ENCODE measurements at regions of chr16 and their contacts with region 1.

Region 1: GRCh38 chr16:66894948-66895688 is 14.8 kb downstream of the PDP2 start:
- DNase-seq: peak; percentile 76
- H3K4me3 ChIP-seq: no peak overlapping the region
- H3K27ac ChIP-seq: no peak overlapping the region
- H3K4me1 ChIP-seq: peaks cover 8% of the 10 kb centered on the region
- H3K27me3 ChIP-seq: no peaks in the 10 kb centered on the region
- CTCF ChIP-seq: peak; percentile 87

Region 2: DNA sequence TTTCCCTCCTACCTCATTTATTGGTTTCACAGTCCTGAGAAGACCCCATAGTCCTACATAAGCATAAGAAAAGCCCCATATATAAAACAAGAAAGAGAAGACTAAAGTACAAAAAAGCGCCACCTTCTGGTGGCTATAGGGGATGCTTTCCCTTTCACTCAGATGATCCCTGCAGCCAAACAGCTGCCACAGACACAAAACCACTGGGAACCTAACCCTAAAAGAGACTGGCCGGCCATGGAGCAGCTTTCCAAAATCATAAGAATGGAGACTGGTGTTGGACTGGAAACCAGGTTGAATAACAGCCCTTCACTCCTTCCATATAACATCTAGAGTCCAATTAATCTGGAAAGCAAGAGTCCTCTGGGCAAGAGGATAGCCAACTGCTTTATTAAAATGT is 155.1 kb before region 1 on chr16:
- CTCF ChIA-PET with region 1: interaction called, 12 read pairs
- POLR2A ChIA-PET with region 1: no interaction called
- intact Hi-C with region 1: no loop called
- DNase-seq: peak; percentile 68
- H3K4me3 ChIP-seq: no peak overlapping the region
- H3K27ac ChIP-seq: peak overlapping the region; percentile 25
- H3K4me1 ChIP-seq: peaks cover 14% of the 10 kb centered on the region
- H3K27me3 ChIP-seq: no peaks in the 10 kb centered on the region
- CTCF ChIP-seq: peak; percentile 88

Region 3: GRCh38 chr16:66928702-66929388 is 33.7 kb after region 1 on chr16:
- CTCF ChIA-PET with region 1: interaction called, 11 read pairs
- POLR2A ChIA-PET with region 1: interaction called, 7 read pairs
- intact Hi-C with region 1: loop called (anchors 1 kb)
- DNase-seq: peak; percentile 51
- H3K4me3 ChIP-seq: no peak overlapping the region
- H3K27ac ChIP-seq: no peak overlapping the region
- H3K4me1 ChIP-seq: peaks cover 13% of the 10 kb centered on the region
- H3K27me3 ChIP-seq: peaks cover 24% of the 10 kb centered on the region
- CTCF ChIP-seq: peak; percentile 71

Region 4: DNA sequence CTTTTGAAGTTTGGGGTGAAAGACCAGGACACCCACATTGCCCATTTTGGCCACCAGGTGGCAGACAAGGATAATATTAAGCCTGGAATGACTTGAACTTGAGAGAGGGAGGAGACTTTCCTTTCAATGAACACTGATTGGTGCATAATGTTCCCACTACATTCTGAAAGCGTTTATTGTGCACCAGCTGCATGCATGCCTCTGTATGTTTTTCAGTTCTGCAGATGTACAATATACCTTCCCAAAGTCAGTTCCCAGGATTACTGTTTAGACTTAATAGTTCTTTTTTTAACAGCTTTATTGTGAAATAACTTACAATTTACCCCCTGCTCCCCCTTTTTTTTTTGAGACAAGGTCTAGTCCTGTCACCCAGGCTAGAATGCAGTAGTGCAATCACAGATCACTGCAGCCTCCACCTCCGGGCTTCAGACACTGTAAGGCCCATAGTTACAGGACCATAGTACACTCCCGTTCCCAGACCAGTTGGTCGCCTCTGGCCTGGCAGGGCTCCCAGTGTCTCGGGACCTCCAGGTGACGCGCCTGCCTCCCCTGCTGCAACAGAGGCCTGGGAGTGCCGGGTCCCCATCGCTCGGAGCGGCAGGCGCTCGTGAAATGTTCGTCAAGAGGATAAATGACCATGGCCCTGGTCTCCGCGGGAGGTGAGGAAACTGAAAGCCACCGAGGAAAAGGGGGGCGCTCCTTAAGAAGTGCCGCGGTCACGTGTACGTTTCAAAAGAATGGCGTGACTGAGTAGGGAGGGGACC is 52.4 kb after region 1 on chr16:
- CTCF ChIA-PET with region 1: no interaction called
- POLR2A ChIA-PET with region 1: no interaction called
- intact Hi-C with region 1: loop called (anchors 5 kb)
- DNase-seq: peak; percentile 92
- H3K4me3 ChIP-seq: peak overlapping the region; percentile 52
- H3K27ac ChIP-seq: no peak overlapping the region
- H3K4me1 ChIP-seq: no peaks in the 10 kb centered on the region
- H3K27me3 ChIP-seq: no peaks in the 10 kb centered on the region
- CTCF ChIP-seq: peak; percentile 94